ENCODE measurements at regions of chr19 and their contacts with region 1.

Region 1: DNA sequence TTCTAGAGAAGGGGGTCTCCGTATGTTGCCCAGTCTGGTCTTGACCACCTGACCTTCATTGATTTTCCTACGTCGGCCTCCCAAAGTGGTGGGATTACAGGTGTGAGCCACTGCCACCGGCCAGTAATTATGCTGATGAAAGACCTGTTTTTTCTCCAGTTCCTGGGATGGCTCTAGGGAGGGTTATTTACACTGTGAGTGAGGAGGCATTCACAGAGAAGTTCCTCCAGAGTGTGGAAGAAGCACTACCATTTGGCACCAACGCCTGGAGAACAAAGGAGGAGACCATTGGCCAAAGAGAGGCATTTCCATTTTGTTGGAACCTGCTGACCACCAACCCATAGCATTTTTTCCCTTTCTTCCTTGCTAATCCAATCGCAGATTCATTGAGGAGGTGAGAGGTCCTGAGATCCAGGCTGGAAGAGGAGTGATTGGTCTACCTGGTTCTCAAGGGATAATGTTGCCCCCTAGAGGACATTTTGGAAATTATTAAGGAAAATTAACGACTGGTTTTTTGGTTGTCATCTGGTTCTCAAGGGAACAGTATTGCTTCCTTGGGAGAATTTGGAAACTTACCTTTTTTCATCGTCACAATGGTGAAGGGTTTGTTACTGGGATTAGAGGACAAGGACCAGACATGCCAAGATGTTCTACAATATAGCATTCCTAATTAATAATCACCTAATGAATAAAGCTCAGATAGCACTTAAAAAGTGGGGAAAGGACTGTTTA is 5.5 kb upstream of the SAE1 start:
- DNase-seq: peak in 5 of 14 experiments; percentile 26 to 80 (median 73)
- ATAC-seq: peak; percentile 59
- H3K4me3 ChIP-seq: no peak overlapping the region
- H3K4me3 Mint-ChIP-seq: peak overlapping the region; percentile 36
- H3K27ac ChIP-seq: no peak overlapping the region
- H3K27ac Mint-ChIP-seq: no peak overlapping the region
- H3K4me1 ChIP-seq: peaks cover 3% of the 10 kb centered on the region
- H3K4me1 Mint-ChIP-seq: peaks cover 4% of the 10 kb centered on the region
- H3K27me3 ChIP-seq: no peaks in the 10 kb centered on the region
- H3K27me3 Mint-ChIP-seq: no peaks in the 10 kb centered on the region
- CTCF ChIP-seq: peak; percentile 84

Region 2: DNA sequence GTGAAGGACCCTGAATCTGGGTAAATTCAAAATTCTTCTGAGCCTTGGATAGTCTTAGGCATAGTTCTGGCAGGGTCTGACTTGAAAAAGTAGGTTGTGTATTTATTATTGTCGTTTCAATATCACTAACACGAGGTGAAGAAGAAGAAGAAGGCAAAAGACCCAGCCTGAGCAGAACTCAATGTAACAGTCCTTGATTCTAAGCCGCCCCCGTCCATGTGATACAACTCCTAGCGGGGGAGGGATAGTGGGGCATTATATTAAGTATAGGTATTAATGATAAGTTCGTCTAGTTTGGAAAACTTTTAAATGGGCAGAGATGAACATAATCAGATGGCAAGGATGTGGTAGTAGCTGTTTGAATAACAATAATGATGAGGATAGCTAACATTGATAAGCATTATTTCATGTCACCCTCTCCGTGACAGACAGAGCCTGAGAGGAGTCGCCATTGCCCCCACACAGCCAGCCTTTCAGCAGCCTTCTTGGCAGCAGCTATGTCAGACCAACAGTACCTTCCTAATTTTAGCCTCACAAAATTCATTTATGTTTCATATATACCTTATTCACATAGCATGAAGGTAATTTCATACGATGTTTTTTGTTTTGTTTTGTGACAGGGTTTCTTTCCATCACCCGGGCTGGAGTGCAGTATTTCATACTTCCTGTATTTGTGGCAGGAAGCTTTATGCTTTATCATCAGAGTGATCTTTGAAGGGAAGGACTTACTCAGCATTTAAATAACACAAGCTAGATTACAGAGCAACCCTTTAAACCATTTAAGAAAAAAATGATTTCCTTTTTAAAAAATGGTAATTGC is 169.9 kb before region 1 on chr19:
- CTCF ChIA-PET with region 1: no interaction called
- POLR2A ChIA-PET with region 1: no interaction called
- intact Hi-C with region 1: no loop called
- DNase-seq: peak in 9 of 14 experiments; percentile 4 to 84 (median 27)
- ATAC-seq: peak; percentile 90
- H3K4me3 ChIP-seq: peak overlapping the region; percentile 53
- H3K4me3 Mint-ChIP-seq: peak overlapping the region; percentile 83
- H3K27ac ChIP-seq: peak overlapping the region; percentile 52 to 73
- H3K27ac Mint-ChIP-seq: peak overlapping the region; percentile 90
- H3K4me1 ChIP-seq: peaks cover 84% of the 10 kb centered on the region
- H3K4me1 Mint-ChIP-seq: peaks cover 78% of the 10 kb centered on the region
- H3K27me3 ChIP-seq: no peaks in the 10 kb centered on the region
- H3K27me3 Mint-ChIP-seq: no peaks in the 10 kb centered on the region
- CTCF ChIP-seq: no peak

Region 3: DNA sequence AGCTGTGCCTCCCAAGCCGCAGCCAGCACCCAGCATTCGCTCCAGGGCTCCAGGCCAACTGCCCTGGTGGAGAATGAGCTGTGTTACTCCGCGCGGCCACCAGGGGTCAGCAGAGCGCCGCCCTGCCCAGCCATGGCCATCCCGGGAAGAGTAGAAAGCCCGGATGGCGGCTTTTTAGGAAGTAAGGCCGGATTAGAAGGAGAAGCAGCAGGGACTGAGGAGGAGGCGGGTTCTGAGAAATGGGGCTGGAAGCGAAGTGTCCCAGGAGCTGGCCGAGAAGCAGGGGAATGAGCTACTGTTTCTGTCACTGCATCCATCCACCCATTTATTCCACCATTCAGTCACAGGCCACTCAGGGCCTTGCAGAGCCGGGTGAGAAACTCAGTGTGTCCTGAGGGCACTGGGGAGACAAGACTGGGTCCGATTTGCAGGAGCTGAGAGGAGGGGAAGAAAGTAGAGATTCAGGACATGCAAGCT is 112.0 kb before region 1 on chr19:
- CTCF ChIA-PET with region 1: interaction called, 4 read pairs
- POLR2A ChIA-PET with region 1: interaction called, 4 read pairs
- intact Hi-C with region 1: loop called in 1 of 2 experiments (anchors 1 kb)
- DNase-seq: peak; percentile 35 to 80 (median 58)
- ATAC-seq: peak; percentile 92
- H3K4me3 ChIP-seq: no peak overlapping the region
- H3K4me3 Mint-ChIP-seq: no peak overlapping the region
- H3K27ac ChIP-seq: no peak overlapping the region
- H3K27ac Mint-ChIP-seq: no peak overlapping the region
- H3K4me1 ChIP-seq: peaks cover 8% of the 10 kb centered on the region
- H3K4me1 Mint-ChIP-seq: peaks cover 8% of the 10 kb centered on the region
- H3K27me3 ChIP-seq: no peaks in the 10 kb centered on the region
- H3K27me3 Mint-ChIP-seq: peaks cover 10% of the 10 kb centered on the region
- CTCF ChIP-seq: peak; percentile 99

Region 4: DNA sequence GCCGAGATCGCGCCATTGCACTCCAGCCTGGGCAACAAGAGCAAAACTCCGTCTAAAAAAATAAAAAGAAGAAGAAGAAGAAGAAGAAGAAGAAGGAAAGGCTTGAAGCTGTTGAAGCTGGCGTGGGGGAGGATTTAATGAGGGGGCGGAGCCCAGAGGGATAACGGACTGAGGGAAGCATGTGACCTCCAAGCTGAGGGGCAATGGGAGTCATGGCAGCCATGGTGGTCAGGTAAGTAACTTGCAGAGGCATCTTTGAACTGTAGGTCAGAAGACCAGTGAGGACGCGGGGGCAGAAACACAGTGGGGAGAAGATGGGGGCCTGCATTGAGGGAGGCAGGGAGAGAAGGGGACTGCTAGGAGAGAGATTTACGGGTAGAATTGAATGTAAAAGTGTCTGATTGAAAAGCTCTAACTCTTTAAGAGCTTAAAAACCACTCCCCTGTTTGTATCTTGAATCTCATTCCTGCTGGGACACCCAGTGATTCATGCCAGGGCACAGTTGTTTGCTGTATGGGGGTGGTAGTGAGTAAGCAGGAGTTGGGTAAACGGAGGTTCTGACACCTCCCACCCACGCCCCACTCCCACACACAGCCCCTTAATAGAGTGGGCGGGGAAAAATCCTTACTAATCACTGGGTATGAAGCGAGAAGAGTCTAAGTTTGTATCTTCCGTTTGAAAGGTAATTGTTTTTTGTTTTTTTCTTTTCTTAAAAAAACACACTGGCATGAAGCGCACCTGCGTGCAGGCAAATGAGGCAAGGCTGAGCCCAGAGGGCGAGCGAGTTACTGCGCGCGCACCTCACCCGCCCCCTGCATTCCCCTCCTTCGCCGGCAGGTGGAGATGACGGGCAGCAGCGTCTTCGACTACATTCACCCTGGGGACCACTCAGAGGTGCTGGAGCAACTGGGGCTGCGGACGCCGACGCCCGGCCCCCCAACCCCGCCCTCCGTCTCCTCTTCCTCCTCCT is 89.7 kb before region 1 on chr19:
- CTCF ChIA-PET with region 1: interaction called, 3 read pairs
- POLR2A ChIA-PET with region 1: no interaction called
- intact Hi-C with region 1: loop called in 1 of 2 experiments (anchors 1 kb)
- DNase-seq: peak; percentile 88 to 99 (median 95)
- ATAC-seq: peak; percentile 96
- H3K4me3 ChIP-seq: peak overlapping the region; percentile 51
- H3K4me3 Mint-ChIP-seq: peak overlapping the region; percentile 94
- H3K27ac ChIP-seq: no peak overlapping the region
- H3K27ac Mint-ChIP-seq: peak overlapping the region; percentile 85
- H3K4me1 ChIP-seq: peaks cover 30% of the 10 kb centered on the region
- H3K4me1 Mint-ChIP-seq: peaks cover 15% of the 10 kb centered on the region
- H3K27me3 ChIP-seq: peaks cover 4 to 5% of the 10 kb centered on the region in 2 experiments
- H3K27me3 Mint-ChIP-seq: peaks cover 23% of the 10 kb centered on the region
- CTCF ChIP-seq: peak; percentile 98

Region 5: GRCh38 chr19:47075179-47075810 is 49.8 kb before region 1 on chr19:
- CTCF ChIA-PET with region 1: interaction called, 16 read pairs
- POLR2A ChIA-PET with region 1: interaction called, 6 read pairs
- intact Hi-C with region 1: loop called (anchors 1 kb)
- DNase-seq: peak in 2 of 14 experiments; percentile 24 to 39
- ATAC-seq: no peak
- H3K4me3 ChIP-seq: no peak overlapping the region
- H3K4me3 Mint-ChIP-seq: no peak overlapping the region
- H3K27ac ChIP-seq: no peak overlapping the region
- H3K27ac Mint-ChIP-seq: no peak overlapping the region
- H3K4me1 ChIP-seq: peaks cover 4% of the 10 kb centered on the region
- H3K4me1 Mint-ChIP-seq: peaks cover 6% of the 10 kb centered on the region
- H3K27me3 ChIP-seq: no peaks in the 10 kb centered on the region
- H3K27me3 Mint-ChIP-seq: no peaks in the 10 kb centered on the region
- CTCF ChIP-seq: no peak

Region 6: GRCh38 chr19:47157431-47158321 is 32.6 kb after region 1 on chr19:
- CTCF ChIA-PET with region 1: no interaction called
- POLR2A ChIA-PET with region 1: no interaction called
- intact Hi-C with region 1: no loop called
- DNase-seq: peak in 12 of 14 experiments; percentile 21 to 84 (median 42)
- ATAC-seq: peak; percentile 15
- H3K4me3 ChIP-seq: peak overlapping the region; percentile 31
- H3K4me3 Mint-ChIP-seq: peak overlapping the region; percentile 81
- H3K27ac ChIP-seq: peak overlapping the region; percentile 42 to 64
- H3K27ac Mint-ChIP-seq: peak overlapping the region; percentile 85
- H3K4me1 ChIP-seq: peaks cover 73% of the 10 kb centered on the region
- H3K4me1 Mint-ChIP-seq: peaks cover 71% of the 10 kb centered on the region
- H3K27me3 ChIP-seq: no peaks in the 10 kb centered on the region
- H3K27me3 Mint-ChIP-seq: no peaks in the 10 kb centered on the region
- CTCF ChIP-seq: no peak

Region 7: GRCh38 chr19:47221080-47221841 is 96.2 kb after region 1 on chr19:
- CTCF ChIA-PET with region 1: no interaction called
- POLR2A ChIA-PET with region 1: no interaction called
- intact Hi-C with region 1: no loop called
- DNase-seq: no peak
- ATAC-seq: no peak
- H3K4me3 ChIP-seq: no peak overlapping the region
- H3K4me3 Mint-ChIP-seq: no peak overlapping the region
- H3K27ac ChIP-seq: no peak overlapping the region
- H3K27ac Mint-ChIP-seq: no peak overlapping the region
- H3K4me1 ChIP-seq: peaks cover 7% of the 10 kb centered on the region
- H3K4me1 Mint-ChIP-seq: peaks cover 5% of the 10 kb centered on the region
- H3K27me3 ChIP-seq: no peaks in the 10 kb centered on the region
- H3K27me3 Mint-ChIP-seq: no peaks in the 10 kb centered on the region
- CTCF ChIP-seq: no peak